Lower leg skin (tissue), 4 donors: ENCODE measurements at regions of chr11 and their contacts with region 1.

Region 1: DNA sequence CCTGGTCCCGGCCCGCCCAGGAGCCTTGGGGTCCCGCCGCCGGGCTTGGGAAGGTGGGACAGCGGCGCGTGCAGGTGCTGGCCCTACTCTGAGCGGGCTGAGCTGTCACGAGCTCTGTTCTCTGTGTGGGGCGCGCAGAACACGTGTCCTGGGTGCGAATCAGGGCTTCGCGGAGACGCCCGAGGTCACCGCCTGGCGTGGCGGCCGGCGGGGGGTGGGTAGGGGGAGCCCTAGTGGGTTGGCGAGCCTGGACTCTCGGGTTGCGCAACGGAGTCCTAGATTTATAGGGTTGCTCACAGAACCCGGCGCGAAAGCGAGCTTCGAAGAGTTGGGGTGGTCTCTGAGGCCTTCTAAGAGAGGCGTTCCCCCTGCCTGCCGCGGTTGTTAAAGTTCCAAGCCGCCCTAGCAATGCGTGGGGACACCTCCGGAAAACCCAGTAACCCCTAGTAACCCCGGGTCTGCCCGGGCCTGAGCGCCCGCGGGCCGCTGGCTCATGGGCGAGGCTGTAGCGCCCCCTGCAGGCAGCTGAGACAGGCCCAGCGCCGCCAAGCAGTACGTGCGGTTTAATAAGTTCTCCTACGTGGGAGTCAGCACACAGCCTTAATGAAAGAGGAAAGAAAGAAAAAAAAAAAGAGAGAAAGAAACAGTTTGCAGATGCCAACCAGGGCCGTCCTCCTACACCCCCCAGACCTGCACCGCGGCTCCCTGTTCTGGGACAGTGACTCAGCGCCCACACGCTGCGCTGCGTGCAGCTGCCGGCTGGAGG is 2.8 kb downstream of the ADM start:
- DNase-seq: peak; percentile 80 to 97
- H3K4me3 ChIP-seq: peak overlapping the region; percentile 76
- CTCF ChIP-seq: peak in 1 of 3 donors; percentile 94
- POLR2A ChIP-seq: no peak

Region 2: DNA sequence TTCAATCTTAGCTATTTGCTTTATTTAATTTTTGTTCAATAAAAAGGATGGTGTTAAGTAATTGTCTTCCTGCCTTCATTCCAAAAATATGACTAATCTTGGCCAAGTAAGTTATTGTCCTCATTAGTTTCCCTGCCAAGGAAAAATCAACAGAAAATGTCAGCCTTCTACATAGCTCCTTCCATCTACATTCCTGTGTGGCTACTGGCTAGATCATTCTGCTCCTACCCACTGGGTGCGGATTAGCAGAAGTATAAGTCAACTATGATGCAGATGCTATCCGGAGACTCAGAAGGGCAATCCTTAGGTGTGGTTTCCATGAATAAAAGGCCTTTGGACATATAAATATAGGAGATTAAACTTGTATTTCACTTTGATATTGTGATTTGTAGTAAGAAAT is 168.0 kb before region 1 on chr11:
- intact Hi-C with region 1: no loop called
- DNase-seq: no peak
- H3K4me3 ChIP-seq: no peak overlapping the region
- CTCF ChIP-seq: no peak
- POLR2A ChIP-seq: no peak

Region 3: GRCh38 chr11:10208131-10208575 is 99.5 kb before region 1 on chr11:
- intact Hi-C with region 1: loop called (anchors 10 kb)
- DNase-seq: no peak
- H3K4me3 ChIP-seq: no peak overlapping the region
- CTCF ChIP-seq: peak in 1 of 3 donors; percentile 54
- POLR2A ChIP-seq: no peak